Activated naive CD4-positive, alpha-beta T cell treated with anti-CD3 and anti-CD28 coated beads for 36 hours (primary cell): ENCODE measurements at regions of chr13 and their contacts with region 1.

Region 1: GRCh38 chr13:44259045-44260027 is 114.3 kb upstream of the SERP2 start:
- DNase-seq: peak; percentile 94
- H3K4me3 Mint-ChIP-seq: peak overlapping the region; percentile 62
- H3K27ac Mint-ChIP-seq: peak overlapping the region; percentile 88
- H3K4me1 Mint-ChIP-seq: peaks cover 24% of the 10 kb centered on the region
- H3K27me3 Mint-ChIP-seq: peaks cover 6% of the 10 kb centered on the region

Region 2: GRCh38 chr13:43905435-43906031 is 353.8 kb before region 1 on chr13:
- CTCF ChIA-PET with region 1: no interaction called
- intact Hi-C with region 1: loop called (anchors 5 kb)
- DNase-seq: peak; percentile 44
- H3K4me3 Mint-ChIP-seq: no peak overlapping the region
- H3K27ac Mint-ChIP-seq: no peak overlapping the region
- H3K4me1 Mint-ChIP-seq: peaks cover 7% of the 10 kb centered on the region
- H3K27me3 Mint-ChIP-seq: peaks cover 16% of the 10 kb centered on the region

Region 3: DNA sequence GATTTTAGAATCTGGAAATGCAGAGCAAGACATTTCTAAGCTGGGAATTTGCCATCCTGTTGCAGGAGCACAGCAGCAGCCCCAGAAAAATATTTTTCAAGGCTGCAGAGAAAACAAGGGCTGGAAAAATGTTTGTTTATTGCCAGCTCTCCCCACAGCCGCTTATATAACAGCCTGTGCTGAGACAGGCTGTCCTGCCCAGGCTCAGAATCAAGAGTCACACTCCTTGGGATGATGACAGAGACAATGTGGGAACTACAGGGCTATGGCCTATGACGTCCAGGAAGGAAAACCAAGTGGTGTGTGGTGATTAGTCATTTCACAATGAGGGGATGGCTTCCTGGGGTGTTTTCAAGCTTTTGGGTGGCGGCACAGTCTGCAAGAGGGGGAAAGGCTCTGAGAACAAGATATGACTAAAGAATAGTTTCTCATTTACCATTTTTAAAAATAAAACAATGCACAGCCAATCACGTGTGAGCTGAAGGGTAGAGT is 22.0 kb before region 1 on chr13:
- CTCF ChIA-PET with region 1: no interaction called
- intact Hi-C with region 1: loop called (anchors 1 kb)
- DNase-seq: peak; percentile 49
- H3K4me3 Mint-ChIP-seq: no peak overlapping the region
- H3K27ac Mint-ChIP-seq: no peak overlapping the region
- H3K4me1 Mint-ChIP-seq: peaks cover 5% of the 10 kb centered on the region
- H3K27me3 Mint-ChIP-seq: peaks cover 8% of the 10 kb centered on the region

Region 4: GRCh38 chr13:44274452-44275205 is 15.3 kb after region 1 on chr13:
- CTCF ChIA-PET with region 1: no interaction called
- intact Hi-C with region 1: loop called (anchors 1 kb)
- DNase-seq: peak; percentile 27
- H3K4me3 Mint-ChIP-seq: peak overlapping the region; percentile 70
- H3K27ac Mint-ChIP-seq: peak overlapping the region; percentile 89
- H3K4me1 Mint-ChIP-seq: peaks cover 65% of the 10 kb centered on the region
- H3K27me3 Mint-ChIP-seq: no peaks in the 10 kb centered on the region

Region 5: GRCh38 chr13:44300895-44301638 is 41.7 kb after region 1 on chr13:
- CTCF ChIA-PET with region 1: no interaction called
- intact Hi-C with region 1: loop called (anchors 1 kb)
- DNase-seq: peak; percentile 72
- H3K4me3 Mint-ChIP-seq: no peak overlapping the region
- H3K27ac Mint-ChIP-seq: peak overlapping the region; percentile 77
- H3K4me1 Mint-ChIP-seq: peaks cover 45% of the 10 kb centered on the region
- H3K27me3 Mint-ChIP-seq: peaks cover 5% of the 10 kb centered on the region

Region 6: GRCh38 chr13:44435142-44435982 is 176.0 kb after region 1 on chr13:
- CTCF ChIA-PET with region 1: no interaction called
- intact Hi-C with region 1: loop called (anchors 1 kb)
- DNase-seq: peak; percentile 96
- H3K4me3 Mint-ChIP-seq: peak overlapping the region; percentile 76
- H3K27ac Mint-ChIP-seq: peak overlapping the region; percentile 24
- H3K4me1 Mint-ChIP-seq: peaks cover 15% of the 10 kb centered on the region
- H3K27me3 Mint-ChIP-seq: peaks cover 9% of the 10 kb centered on the region